AG04449 (cell line): ENCODE measurements at regions of chr11 and their contacts with region 1.

Region 1: GRCh38 chr11:58567889-58568512 is 7.7 kb downstream of the LPXN start:
- DNase-seq: no peak
- H3K4me3 ChIP-seq: no peak overlapping the region
- CTCF ChIP-seq: peak; percentile 83

Region 2: DNA sequence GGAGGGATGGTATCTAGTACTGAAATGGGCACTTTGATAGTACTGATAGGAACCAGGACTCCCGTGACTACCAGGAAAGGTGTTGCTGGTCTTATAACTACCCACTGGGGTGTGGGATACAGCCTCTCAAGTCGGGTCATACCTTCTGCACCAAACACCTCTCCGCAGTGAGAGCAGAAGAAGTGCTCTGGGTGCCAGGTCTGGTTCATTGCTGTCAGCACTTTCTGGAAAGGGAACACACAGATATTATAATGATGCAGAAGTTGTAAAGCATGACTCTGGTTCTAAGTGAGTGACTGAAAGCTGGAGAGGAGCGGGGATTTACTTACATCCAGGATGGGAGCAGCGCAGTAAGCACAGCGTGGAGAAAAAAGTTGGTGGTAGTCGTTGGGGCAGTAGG is 18.4 kb before region 1 on chr11:
- CTCF ChIA-PET with region 1: interaction called, 36 read pairs
- POLR2A ChIA-PET with region 1: no interaction called
- DNase-seq: no peak
- H3K4me3 ChIP-seq: no peak overlapping the region
- CTCF ChIP-seq: no peak

Region 3: GRCh38 chr11:58579192-58580129 is 11.5 kb after region 1 on chr11:
- CTCF ChIA-PET with region 1: interaction called, 26 read pairs
- POLR2A ChIA-PET with region 1: no interaction called
- DNase-seq: no peak
- H3K4me3 ChIP-seq: peak overlapping the region; percentile 93
- CTCF ChIP-seq: peak; percentile 94

Region 4: GRCh38 chr11:58675334-58676155 is 107.5 kb after region 1 on chr11:
- CTCF ChIA-PET with region 1: interaction called, 23 read pairs
- POLR2A ChIA-PET with region 1: no interaction called
- DNase-seq: no peak
- H3K4me3 ChIP-seq: no peak overlapping the region
- CTCF ChIP-seq: peak; percentile 96

Region 5: GRCh38 chr11:58866788-58867187 is 298.8 kb after region 1 on chr11:
- CTCF ChIA-PET with region 1: no interaction called
- POLR2A ChIA-PET with region 1: no interaction called
- DNase-seq: peak; percentile 9
- H3K4me3 ChIP-seq: no peak overlapping the region
- CTCF ChIP-seq: no peak

Region 6: GRCh38 chr11:59053387-59053786 is 485.4 kb after region 1 on chr11:
- CTCF ChIA-PET with region 1: no interaction called
- POLR2A ChIA-PET with region 1: no interaction called
- DNase-seq: no peak
- H3K4me3 ChIP-seq: no peak overlapping the region
- CTCF ChIP-seq: peak; percentile 69